WTC11 (cell line): ENCODE measurements at regions of chr2 and their contacts with region 1.

Region 1: GRCh38 chr2:20446917-20447436 is at the start of gene RHOB:
- DNase-seq: peak; percentile 95
- ATAC-seq: peak; percentile 81
- H3K4me3 Mint-ChIP-seq: peak within 1 kb of the TSS; percentile 82
- H3K27ac Mint-ChIP-seq: no peak within 1 kb of the TSS
- H3K4me1 Mint-ChIP-seq: peaks cover 35% of the 10 kb centered on the region
- H3K27me3 Mint-ChIP-seq: peaks cover 60% of the 10 kb centered on the region
- CTCF ChIP-seq: no peak
- total RNA-seq, gene RHOB: 20.4 to 23.2 TPM (median 22.7 TPM) in 3 replicates

Region 2: GRCh38 chr2:20350753-20351554 is 96.0 kb before region 1 on chr2 and contains the start of gene PUM2:
- CTCF ChIA-PET with region 1: interaction called, 5 read pairs
- POLR2A ChIA-PET with region 1: interaction called, 17 read pairs
- DNase-seq: peak; percentile 90
- ATAC-seq: peak; percentile 82
- H3K4me3 Mint-ChIP-seq: peak within 1 kb of the TSS; percentile 95
- H3K27ac Mint-ChIP-seq: peak within 1 kb of the TSS; percentile 46
- H3K4me1 Mint-ChIP-seq: peaks cover 35% of the 10 kb centered on the region
- H3K27me3 Mint-ChIP-seq: no peaks in the 10 kb centered on the region
- CTCF ChIP-seq: no peak
- total RNA-seq, gene PUM2: 84.7 to 104 TPM (median 90.0 TPM) in 3 replicates

Region 3: GRCh38 chr2:20419007-20419576 is 27.9 kb before region 1 on chr2:
- CTCF ChIA-PET with region 1: interaction called, 13 read pairs
- POLR2A ChIA-PET with region 1: interaction called, 19 read pairs
- DNase-seq: no peak
- ATAC-seq: peak; percentile 29
- H3K4me3 Mint-ChIP-seq: no peak overlapping the region
- H3K27ac Mint-ChIP-seq: no peak overlapping the region
- H3K4me1 Mint-ChIP-seq: peaks cover 9% of the 10 kb centered on the region; the same call in 1 of the 2 replicates
- H3K27me3 Mint-ChIP-seq: no peaks in the 10 kb centered on the region
- CTCF ChIP-seq: no peak

Region 4: DNA sequence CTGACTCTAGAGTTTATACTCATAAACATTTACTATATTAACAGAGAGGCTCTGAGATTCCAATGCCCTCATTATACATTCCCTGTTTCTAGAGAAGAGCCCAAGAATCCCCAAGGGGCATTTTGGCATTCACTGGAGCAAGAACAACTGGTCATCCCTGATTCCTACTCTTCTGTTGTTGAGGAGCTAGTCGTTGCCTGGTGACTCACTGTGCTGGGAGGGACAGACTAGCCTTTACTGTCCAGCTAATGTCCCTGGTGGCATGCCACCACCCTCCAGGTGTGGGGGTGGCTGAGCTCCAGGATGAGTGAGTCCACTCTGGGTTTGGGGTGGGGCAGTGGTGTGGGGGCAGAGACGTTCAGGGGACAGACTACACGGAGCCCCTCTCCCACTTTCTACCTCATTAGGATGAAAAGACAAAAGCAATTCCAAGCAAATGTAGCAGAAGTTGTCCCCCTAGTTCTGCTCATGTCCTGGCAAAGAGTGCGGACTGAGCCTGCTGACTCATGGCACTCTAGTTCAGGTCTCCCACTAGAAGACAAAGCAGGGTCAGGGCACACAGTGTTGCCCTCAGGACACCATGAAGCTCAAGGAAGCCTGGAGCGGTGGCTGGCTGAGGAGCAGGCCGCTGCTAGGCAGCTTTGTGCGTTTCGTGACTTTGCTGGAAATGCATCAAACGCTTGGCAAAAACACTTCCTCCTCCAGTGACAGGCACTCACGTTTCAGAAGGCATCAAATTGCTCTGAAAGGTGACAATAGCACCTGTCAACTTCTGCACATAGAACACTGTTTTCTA is 49.3 kb after region 1 on chr2:
- CTCF ChIA-PET with region 1: no interaction called
- POLR2A ChIA-PET with region 1: no interaction called
- DNase-seq: no peak
- ATAC-seq: no peak
- H3K4me3 Mint-ChIP-seq: no peak overlapping the region
- H3K27ac Mint-ChIP-seq: no peak overlapping the region; the same call in 1 of the 2 replicates
- H3K4me1 Mint-ChIP-seq: peaks cover 3% of the 10 kb centered on the region
- H3K27me3 Mint-ChIP-seq: no peaks in the 10 kb centered on the region
- CTCF ChIP-seq: no peak

Region 5: DNA sequence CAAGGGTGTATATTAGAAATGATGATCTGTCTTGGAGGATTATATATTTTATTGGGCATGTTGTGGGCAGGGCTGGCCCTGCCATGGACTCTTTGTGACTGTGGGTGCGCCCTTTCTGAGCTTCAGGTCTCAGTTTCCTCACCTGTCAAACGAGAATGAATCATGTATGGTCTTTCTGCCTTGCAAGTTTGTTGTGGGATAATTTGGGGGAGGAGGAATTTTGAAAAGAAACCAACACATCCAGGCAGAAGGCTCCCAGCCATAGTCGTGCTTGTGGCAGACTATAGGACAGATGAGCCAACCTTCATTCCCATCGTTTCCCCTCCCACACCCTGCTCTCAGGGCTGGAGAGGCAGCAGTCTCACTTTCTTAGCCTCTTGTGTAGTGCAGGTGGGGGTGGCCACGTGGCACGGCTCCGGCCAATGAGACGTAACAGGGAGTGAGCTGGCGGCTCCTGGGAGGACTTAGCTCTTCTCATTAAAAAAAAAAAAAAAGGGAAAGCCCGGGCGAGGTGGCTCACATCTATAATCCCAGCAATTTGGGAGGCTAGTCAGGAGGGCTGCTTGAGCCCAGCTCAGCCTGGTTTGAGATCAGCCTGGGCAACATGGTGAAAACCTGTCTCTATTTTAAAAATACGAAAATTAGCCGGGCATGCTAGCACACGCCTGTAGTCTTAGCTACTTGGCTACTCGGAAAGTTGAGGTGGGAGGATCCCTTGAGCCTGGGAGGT is 63.0 kb after region 1 on chr2:
- CTCF ChIA-PET with region 1: interaction called, 5 read pairs
- POLR2A ChIA-PET with region 1: interaction called, 19 read pairs
- DNase-seq: peak; percentile 69
- ATAC-seq: peak; percentile 98
- H3K4me3 Mint-ChIP-seq: no peak overlapping the region
- H3K27ac Mint-ChIP-seq: no peak overlapping the region
- H3K4me1 Mint-ChIP-seq: peaks cover 25% of the 10 kb centered on the region
- H3K27me3 Mint-ChIP-seq: peaks cover 3% of the 10 kb centered on the region; the same call in 1 of the 2 replicates
- CTCF ChIP-seq: no peak

Region 6: GRCh38 chr2:20578895-20579825 is 132.2 kb after region 1 on chr2:
- CTCF ChIA-PET with region 1: no interaction called
- POLR2A ChIA-PET with region 1: interaction called, 16 read pairs
- DNase-seq: no peak
- ATAC-seq: peak; percentile 55
- H3K4me3 Mint-ChIP-seq: no peak overlapping the region
- H3K27ac Mint-ChIP-seq: no peak overlapping the region
- H3K4me1 Mint-ChIP-seq: peaks cover 8% of the 10 kb centered on the region
- H3K27me3 Mint-ChIP-seq: peaks cover 3% of the 10 kb centered on the region
- CTCF ChIP-seq: no peak

Region 7: GRCh38 chr2:20617892-20618467 is 171.0 kb after region 1 on chr2:
- CTCF ChIA-PET with region 1: interaction called, 15 read pairs
- POLR2A ChIA-PET with region 1: interaction called, 27 read pairs
- DNase-seq: no peak
- ATAC-seq: peak; percentile 11; the same call in 1 of the 2 replicates
- H3K4me3 Mint-ChIP-seq: no peak overlapping the region
- H3K27ac Mint-ChIP-seq: peak overlapping the region; percentile 72; the same call in 1 of the 2 replicates
- H3K4me1 Mint-ChIP-seq: peaks cover 31% of the 10 kb centered on the region
- H3K27me3 Mint-ChIP-seq: no peaks in the 10 kb centered on the region
- CTCF ChIP-seq: no peak

Region 8: DNA sequence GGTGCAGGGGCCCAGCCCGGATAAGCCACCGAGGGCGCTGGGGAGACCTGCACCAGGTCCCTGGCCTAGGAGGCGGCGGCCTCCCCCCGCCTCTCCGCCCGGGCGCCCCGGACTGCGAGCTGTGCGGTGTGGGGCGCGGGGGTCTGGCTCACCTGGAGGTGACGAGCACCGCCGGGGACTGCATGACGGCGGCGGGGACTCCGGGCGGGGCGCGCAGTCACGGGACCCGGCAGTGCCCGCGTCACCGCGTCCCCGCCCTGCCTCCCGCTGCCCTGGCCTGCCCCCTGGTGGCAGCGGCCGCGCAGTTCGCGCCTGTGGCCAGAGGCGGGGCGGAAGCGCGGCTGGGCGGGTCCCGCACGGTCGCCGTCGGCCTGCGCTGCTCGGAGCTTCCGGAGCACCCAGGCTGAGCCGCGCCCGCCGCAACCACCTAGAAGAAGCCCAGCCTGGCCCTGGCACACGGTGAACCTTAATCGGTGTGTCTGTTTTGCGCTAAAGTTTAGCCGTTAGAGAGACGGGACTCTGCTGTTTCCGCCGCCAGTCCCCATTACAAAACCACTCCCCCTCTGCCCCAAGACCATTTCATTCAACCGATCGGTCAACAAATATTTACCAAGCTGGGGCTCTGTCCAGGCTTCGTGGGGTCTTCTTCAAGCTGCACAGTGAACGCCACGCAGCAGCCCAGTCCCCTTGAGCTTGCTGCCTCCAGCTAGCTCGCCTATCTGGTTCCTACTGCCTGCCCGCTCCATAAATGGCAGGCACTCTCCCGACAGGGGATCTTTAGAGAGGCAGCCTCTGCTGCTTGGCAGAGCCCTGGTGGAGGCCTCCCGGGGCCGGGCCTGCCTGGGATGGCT is 204.1 kb after region 1 on chr2 and contains the start of gene HS1BP3:
- CTCF ChIA-PET with region 1: interaction called, 30 read pairs
- POLR2A ChIA-PET with region 1: interaction called, 19 read pairs
- DNase-seq: peak; percentile 77
- ATAC-seq: peak; percentile 93
- H3K4me3 Mint-ChIP-seq: peak within 1 kb of the TSS; percentile 83
- H3K27ac Mint-ChIP-seq: peak within 1 kb of the TSS; percentile 69; the same call in 1 of the 2 replicates
- H3K4me1 Mint-ChIP-seq: peaks cover 31% of the 10 kb centered on the region
- H3K27me3 Mint-ChIP-seq: peaks cover 17% of the 10 kb centered on the region
- CTCF ChIP-seq: peak; percentile 88
- total RNA-seq, gene HS1BP3: 17.9 to 20.1 TPM (median 19.8 TPM) in 3 replicates

Region 9: DNA sequence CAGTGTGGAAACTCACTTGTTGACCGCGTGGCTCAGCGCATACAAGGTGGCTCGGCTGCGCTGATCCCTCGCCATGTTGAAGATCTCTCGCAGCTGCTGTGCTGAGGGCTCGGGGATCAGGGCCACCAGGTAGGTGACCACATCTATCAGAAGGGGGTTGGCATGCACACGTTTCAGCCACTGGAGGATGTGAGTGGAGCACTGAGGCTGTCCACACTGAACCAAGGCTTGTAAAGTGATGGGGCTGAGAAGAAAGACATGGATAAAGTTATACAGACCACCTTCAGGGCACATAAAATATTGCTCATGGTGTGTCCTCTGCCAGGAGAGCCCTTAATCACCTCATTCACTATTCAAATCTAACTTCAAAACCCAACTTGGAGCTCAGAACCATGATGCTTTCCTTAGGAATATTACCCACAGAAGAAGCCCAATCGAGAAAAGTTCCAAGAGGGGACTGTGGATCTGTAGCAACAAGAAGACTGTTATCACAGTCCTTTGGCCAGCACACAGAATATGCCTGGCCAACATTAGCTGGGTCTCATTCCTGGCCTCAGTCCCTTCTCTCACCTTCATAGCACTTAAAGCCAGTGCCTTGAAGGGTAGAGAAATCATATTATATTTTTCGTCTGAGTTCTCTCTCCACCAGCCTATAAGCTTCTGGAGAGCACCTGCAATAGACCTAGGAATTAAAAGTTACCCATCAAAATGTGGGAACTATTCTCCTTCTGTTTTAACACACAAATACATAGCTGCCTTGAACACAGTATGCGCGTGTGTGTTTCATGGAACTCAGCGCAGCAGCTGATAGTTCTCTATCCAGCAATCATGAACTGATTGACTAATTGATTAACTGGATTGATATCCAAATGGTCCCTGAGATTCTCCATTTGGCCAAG is 585.6 kb after region 1 on chr2:
- CTCF ChIA-PET with region 1: no interaction called
- POLR2A ChIA-PET with region 1: no interaction called
- DNase-seq: no peak
- ATAC-seq: no peak
- H3K4me3 Mint-ChIP-seq: no peak overlapping the region
- H3K27ac Mint-ChIP-seq: no peak overlapping the region
- H3K4me1 Mint-ChIP-seq: no peaks in the 10 kb centered on the region
- H3K27me3 Mint-ChIP-seq: no peaks in the 10 kb centered on the region
- CTCF ChIP-seq: no peak